Activated CD4-positive, alpha-beta T cell treated with anti-CD3 and anti-CD28 coated beads, Interleukin-2, amount 10 ng/mL, durations not matched to agents 7 days and 5 days (primary cell): ENCODE measurements at regions of chr16 and their contacts with region 1.

Region 1: GRCh38 chr16:15643048-15643945 is at the start of gene MARF1:
- DNase-seq: peak; percentile 99
- H3K4me3 Mint-ChIP-seq: peak within 1 kb of the TSS; percentile 93
- H3K27ac Mint-ChIP-seq: peak within 1 kb of the TSS; percentile 98
- H3K4me1 Mint-ChIP-seq: peaks cover 51% of the 10 kb centered on the region
- H3K27me3 Mint-ChIP-seq: no peaks in the 10 kb centered on the region
- total RNA-seq, gene MARF1: 79.9 to 101 TPM

Region 2: GRCh38 chr16:15658149-15658548 is 14.9 kb after region 1 on chr16:
- CTCF ChIA-PET with region 1: interaction called, 12 read pairs
- POLR2A ChIA-PET with region 1: interaction called, 4 read pairs
- DNase-seq: no peak
- H3K4me3 Mint-ChIP-seq: no peak overlapping the region
- H3K27ac Mint-ChIP-seq: peak overlapping the region; percentile 81
- H3K4me1 Mint-ChIP-seq: peaks cover 51% of the 10 kb centered on the region
- H3K27me3 Mint-ChIP-seq: no peaks in the 10 kb centered on the region